ENCODE measurements at regions of chr10 and their contacts with region 1.

Region 1: GRCh38 chr10:27742195-27743011 is 3.2 kb downstream of the MKX start:
- DNase-seq: peak; percentile 94
- H3K4me3 Mint-ChIP-seq: peak overlapping the region; percentile 69
- H3K27ac Mint-ChIP-seq: peak overlapping the region; percentile 29
- H3K4me1 Mint-ChIP-seq: peaks cover 20% of the 10 kb centered on the region
- H3K27me3 Mint-ChIP-seq: peaks cover 67% of the 10 kb centered on the region

Region 2: GRCh38 chr10:27504007-27504807 is 238.2 kb before region 1 on chr10 and contains the start of gene RAB18:
- intact Hi-C with region 1: loop called (anchors 5 kb)
- DNase-seq: peak; percentile 99
- H3K4me3 Mint-ChIP-seq: peak within 1 kb of the TSS; percentile 99
- H3K27ac Mint-ChIP-seq: peak within 1 kb of the TSS; percentile 98
- H3K4me1 Mint-ChIP-seq: peaks cover 44% of the 10 kb centered on the region
- H3K27me3 Mint-ChIP-seq: peaks cover 6% of the 10 kb centered on the region
- total RNA-seq, gene RAB18: 55.4 and 58.3 TPM in 2 replicates

Region 3: GRCh38 chr10:27801171-27801785 is 58.9 kb after region 1 on chr10:
- intact Hi-C with region 1: no loop called
- DNase-seq: no peak
- H3K4me3 Mint-ChIP-seq: no peak overlapping the region
- H3K27ac Mint-ChIP-seq: no peak overlapping the region
- H3K4me1 Mint-ChIP-seq: no peaks in the 10 kb centered on the region
- H3K27me3 Mint-ChIP-seq: peaks cover 15% of the 10 kb centered on the region

Region 4: DNA sequence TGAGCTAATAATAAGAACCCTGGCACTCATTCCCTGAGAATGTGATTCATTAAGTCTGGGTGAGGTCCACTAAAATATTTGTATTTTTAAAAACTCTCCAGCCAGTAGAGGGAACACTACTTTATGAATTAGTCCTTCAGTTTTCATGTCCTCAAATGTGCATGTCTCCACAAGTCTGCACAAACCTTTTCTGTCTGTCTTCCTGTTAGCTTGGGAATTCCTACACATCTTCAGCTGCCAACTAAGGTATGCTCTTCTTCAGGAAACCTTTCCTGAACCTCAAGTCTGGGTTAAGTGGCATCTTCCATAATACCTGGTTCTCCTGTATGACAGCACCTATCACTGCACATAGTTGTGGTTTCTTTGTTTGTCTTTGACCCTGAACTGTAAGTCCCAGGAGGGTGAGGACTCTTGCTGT is 122.8 kb after region 1 on chr10:
- intact Hi-C with region 1: no loop called
- DNase-seq: no peak
- H3K4me3 Mint-ChIP-seq: no peak overlapping the region
- H3K27ac Mint-ChIP-seq: no peak overlapping the region
- H3K4me1 Mint-ChIP-seq: no peaks in the 10 kb centered on the region
- H3K27me3 Mint-ChIP-seq: no peaks in the 10 kb centered on the region

Region 5: GRCh38 chr10:27914888-27915287 is 172.5 kb after region 1 on chr10:
- intact Hi-C with region 1: no loop called
- DNase-seq: no peak
- H3K4me3 Mint-ChIP-seq: no peak overlapping the region
- H3K27ac Mint-ChIP-seq: no peak overlapping the region
- H3K4me1 Mint-ChIP-seq: no peaks in the 10 kb centered on the region
- H3K27me3 Mint-ChIP-seq: peaks cover 4% of the 10 kb centered on the region

Region 6: DNA sequence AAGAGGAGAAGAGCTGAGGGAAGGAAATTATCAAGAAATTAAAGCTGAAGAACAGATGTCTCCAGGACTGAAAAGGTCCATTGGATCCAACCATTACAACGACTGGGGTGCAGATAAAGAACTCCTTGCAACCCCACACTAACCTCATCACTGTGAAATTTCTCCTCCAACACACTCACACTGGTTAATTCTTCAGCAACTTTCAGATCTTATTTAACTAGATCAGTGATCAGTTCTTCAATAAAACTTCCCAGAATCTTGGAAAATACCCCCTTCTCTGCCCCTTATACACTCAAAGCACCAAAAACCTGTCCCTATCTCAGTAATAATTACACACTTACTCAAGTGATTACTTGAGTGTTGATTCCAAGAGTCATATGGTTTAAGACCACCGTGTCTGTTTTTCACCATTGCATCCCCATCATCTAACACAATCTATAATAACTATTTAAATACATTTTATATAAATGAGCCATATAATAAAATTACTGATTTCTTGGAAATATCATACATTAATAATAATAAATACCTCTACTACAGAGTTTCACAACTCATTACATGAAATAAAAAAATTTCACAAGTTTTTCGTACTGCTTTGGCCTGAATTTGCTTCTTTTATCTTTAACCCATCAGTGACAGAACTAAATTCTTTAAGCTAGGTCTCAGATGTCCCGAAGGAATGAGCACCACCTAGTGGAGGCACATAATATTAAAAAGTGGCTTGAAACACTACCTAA is 436.8 kb after region 1 on chr10:
- intact Hi-C with region 1: loop called (anchors 1 kb)
- DNase-seq: peak; percentile 85
- H3K4me3 Mint-ChIP-seq: peak overlapping the region; percentile 76
- H3K27ac Mint-ChIP-seq: peak overlapping the region; percentile 85
- H3K4me1 Mint-ChIP-seq: peaks cover 23% of the 10 kb centered on the region
- H3K27me3 Mint-ChIP-seq: peaks cover 8% of the 10 kb centered on the region

Region 7: GRCh38 chr10:28302638-28303488 is 560.5 kb after region 1 on chr10 and contains the start of gene MPP7:
- intact Hi-C with region 1: loop called (anchors 1 kb)
- DNase-seq: peak; percentile 99
- H3K4me3 Mint-ChIP-seq: peak within 1 kb of the TSS; percentile 96
- H3K27ac Mint-ChIP-seq: peak within 1 kb of the TSS; percentile 82
- H3K4me1 Mint-ChIP-seq: peaks cover 29% of the 10 kb centered on the region
- H3K27me3 Mint-ChIP-seq: peaks cover 45% of the 10 kb centered on the region
- total RNA-seq, gene MPP7: 0.43 and 0.54 TPM in 2 replicates

Region 8: DNA sequence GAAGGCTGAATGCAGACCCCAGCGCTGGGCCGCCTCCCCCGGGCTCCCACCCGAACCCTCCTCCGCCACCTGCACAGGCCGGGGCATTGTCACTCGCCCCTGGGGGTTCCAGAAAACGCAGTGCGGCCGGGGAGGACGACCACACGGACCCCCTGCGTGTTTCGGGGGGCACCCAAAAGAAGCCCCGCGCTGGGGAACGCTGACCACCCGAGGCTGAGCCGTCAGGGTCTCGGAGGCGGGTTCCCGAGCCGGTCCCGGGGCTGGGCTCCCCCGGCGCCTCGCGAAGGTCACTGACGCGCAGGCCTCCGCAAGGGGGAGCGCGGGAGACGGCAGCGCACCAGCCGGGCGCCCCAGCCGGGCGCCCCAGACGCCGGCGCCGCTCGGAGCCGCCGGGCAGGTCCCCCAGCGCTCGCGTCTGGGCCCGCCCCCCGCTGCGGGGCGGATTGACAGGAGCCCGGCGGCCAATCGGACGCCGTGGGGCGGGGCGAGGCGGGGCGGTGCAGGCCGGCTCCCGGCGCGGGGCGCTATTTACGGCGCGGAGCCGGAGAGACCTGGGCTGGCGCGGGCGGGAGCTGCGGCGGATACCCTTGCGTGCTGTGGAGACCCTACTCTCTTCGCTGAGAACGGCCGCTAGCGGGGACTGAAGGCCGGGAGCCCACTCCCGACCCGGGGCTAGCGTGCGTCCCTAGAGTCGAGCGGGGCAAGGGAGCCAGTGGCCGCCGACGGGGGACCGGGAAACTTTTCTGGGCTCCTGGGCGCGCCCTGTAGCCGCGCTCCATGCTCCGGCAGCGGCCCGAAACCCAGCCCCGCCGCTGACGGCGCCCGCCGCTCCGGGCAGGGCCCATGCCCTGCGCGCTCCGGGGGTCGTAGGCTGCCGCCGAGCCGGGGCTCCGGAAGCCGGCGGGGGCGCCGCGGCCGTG is 934.8 kb after region 1 on chr10 and contains the start of gene BAMBI:
- intact Hi-C with region 1: loop called (anchors 5 kb)
- DNase-seq: peak; percentile 97
- H3K4me3 Mint-ChIP-seq: peak within 1 kb of the TSS; percentile 75
- H3K27ac Mint-ChIP-seq: peak within 1 kb of the TSS; percentile 30
- H3K4me1 Mint-ChIP-seq: peaks cover 19% of the 10 kb centered on the region
- H3K27me3 Mint-ChIP-seq: peaks cover 72% of the 10 kb centered on the region
- total RNA-seq, gene BAMBI: 0.31 and 0.44 TPM in 2 replicates

Measured in activated CD4-positive, alpha-beta T cell treated with anti-CD3 and anti-CD28 coated beads, Interleukin-2, amount 10 ng/mL, durations not matched to agents 24 days and 14 days (primary cell).